Left cardiac atrium (tissue), 4 donors: ENCODE measurements at regions of chr13 and their contacts with region 1.

Region 1: GRCh38 chr13:111281751-111282311 is 38.6 kb upstream of the TEX29 start:
- DNase-seq: no peak
- ATAC-seq: peak; percentile 18 to 45

Region 2: DNA sequence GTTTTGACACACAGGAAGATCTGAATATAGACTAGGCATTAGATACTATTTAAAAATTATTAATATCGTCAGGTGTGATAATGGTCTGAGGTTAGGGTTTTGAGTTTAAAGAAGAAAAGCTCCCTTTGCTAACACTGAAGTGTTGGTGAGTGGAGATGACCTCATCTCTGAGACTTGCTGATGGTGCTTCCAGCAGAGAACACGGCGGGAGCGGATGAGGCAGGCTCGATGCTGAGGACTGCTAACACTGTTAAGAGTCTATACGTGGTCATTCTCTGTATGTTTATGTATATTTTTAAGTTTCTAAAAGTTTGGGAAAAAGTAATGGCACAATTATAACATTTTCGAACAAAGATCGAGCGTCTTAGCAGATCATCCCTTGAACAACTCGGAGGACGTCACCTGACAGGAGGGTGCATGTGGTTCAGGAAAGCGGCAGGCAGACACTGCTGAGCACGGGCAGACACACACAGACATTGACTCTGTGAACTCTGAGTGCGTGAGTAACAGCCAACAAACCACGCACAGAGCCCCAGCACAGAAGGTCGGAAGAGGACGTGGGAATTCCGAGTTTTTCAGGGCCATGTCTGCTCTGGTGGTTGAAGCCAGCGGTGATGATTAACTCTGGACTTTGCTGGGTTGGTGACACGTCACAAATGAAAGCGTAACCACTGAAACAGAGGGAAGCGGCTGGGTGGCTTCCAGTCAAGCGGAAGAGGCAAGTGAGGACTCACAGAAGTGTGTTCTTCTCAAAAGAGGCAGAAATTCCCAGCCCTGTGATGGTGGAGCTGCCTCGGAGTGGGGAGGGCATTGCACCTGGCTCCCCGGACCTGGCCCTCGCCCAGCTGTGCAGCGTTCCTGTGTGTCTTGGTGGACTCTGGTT is 53.3 kb before region 1 on chr13:
- intact Hi-C with region 1: loop called in 1 of 2 experiments (anchors 10 kb)
- DNase-seq: no peak
- ATAC-seq: no peak

Region 3: DNA sequence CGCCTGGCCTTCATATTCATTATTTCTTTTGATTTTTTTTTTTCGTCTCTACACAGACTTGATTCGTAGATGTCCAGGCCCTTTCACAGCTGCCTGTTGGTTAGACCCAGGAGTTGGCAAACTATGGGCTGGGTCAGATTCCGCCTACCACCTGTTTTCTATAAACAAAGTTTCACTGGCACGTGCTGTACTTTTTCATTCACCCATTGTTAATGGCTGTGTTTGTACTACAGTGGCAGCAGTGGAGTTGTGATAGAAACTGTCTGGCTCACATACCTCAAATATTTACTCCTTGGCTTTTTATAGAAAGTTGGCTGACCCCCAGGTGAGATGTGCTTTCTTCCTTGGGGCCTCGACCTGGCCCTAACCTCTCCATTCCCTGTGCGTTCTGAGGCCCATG is 34.3 kb before region 1 on chr13:
- intact Hi-C with region 1: loop called in 1 of 2 experiments (anchors 5 kb)
- DNase-seq: no peak
- ATAC-seq: peak; percentile 51 to 55